IMR-90 (cell line): ENCODE measurements at regions of chr7 and their contacts with region 1.

Region 1: DNA sequence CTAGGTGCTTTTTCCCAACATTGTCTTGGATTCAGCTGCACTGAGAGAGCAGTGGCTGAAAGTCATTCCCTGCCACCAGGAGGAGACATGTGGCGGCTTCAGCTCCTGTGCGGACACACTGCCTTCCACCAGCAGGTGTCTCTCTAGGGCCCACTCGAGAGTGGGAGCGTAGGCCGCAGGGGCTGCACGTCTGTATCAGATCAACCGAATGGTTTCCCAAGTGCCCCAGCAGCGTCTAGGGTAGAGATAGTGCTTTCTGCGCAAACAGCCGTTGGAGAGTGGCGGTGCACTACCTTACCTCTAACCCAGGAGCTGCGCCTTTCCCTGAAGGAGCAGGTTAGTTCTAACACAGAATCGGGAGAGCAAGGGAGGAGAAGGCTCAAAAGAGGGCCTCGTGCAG is 31.7 kb downstream of the PAPOLB start:
- DNase-seq: peak; percentile 57
- ATAC-seq: peak; percentile 98
- H3K4me3 ChIP-seq: no peak overlapping the region
- H3K27ac ChIP-seq: no peak overlapping the region
- H3K4me1 ChIP-seq: no peaks in the 10 kb centered on the region
- H3K27me3 ChIP-seq: no peaks in the 10 kb centered on the region
- CTCF ChIP-seq: peak; percentile 81
- POLR2A ChIP-seq: no peak
- RAD21 ChIP-seq: peak; percentile 52

Region 2: GRCh38 chr7:4842319-4843064 is 12.3 kb after region 1 on chr7:
- CTCF ChIA-PET with region 1: no interaction called
- POLR2A ChIA-PET with region 1: no interaction called
- dilution Hi-C with region 1: no loop called
- in situ Hi-C with region 1: no loop called
- intact Hi-C with region 1: no loop called
- DNase-seq: peak; percentile 13
- ATAC-seq: peak; percentile 83
- H3K4me3 ChIP-seq: no peak overlapping the region
- H3K27ac ChIP-seq: peak overlapping the region; percentile 77; the same call in 1 of the 2 replicates
- H3K4me1 ChIP-seq: peaks cover 5% of the 10 kb centered on the region; the same call in 1 of the 2 replicates
- H3K27me3 ChIP-seq: no peaks in the 10 kb centered on the region; the same call in 1 of the 2 replicates
- CTCF ChIP-seq: no peak
- POLR2A ChIP-seq: no peak
- RAD21 ChIP-seq: no peak

Region 3: GRCh38 chr7:4883374-4884144 is 53.4 kb after region 1 on chr7 and contains the start of gene RADIL:
- CTCF ChIA-PET with region 1: no interaction called
- POLR2A ChIA-PET with region 1: no interaction called
- dilution Hi-C with region 1: no loop called
- in situ Hi-C with region 1: no loop called
- intact Hi-C with region 1: loop called (anchors 2 kb)
- DNase-seq: peak; percentile 74
- ATAC-seq: peak; percentile 93
- H3K4me3 ChIP-seq: peak within 1 kb of the TSS; percentile 53
- H3K27ac ChIP-seq: no peak within 1 kb of the TSS
- H3K4me1 ChIP-seq: peaks cover 2% of the 10 kb centered on the region; the same call in 1 of the 2 replicates
- H3K27me3 ChIP-seq: peaks cover 2% of the 10 kb centered on the region
- CTCF ChIP-seq: peak; percentile 63
- POLR2A ChIP-seq: no peak
- RAD21 ChIP-seq: peak; percentile 37
- total RNA-seq, gene RADIL: 0.18 TPM in 1 of 2 replicates, not detected in the other

Region 4: GRCh38 chr7:4895766-4896165 is 65.6 kb after region 1 on chr7:
- CTCF ChIA-PET with region 1: no interaction called
- POLR2A ChIA-PET with region 1: no interaction called
- dilution Hi-C with region 1: no loop called
- in situ Hi-C with region 1: no loop called
- intact Hi-C with region 1: no loop called
- DNase-seq: no peak
- ATAC-seq: no peak
- H3K4me3 ChIP-seq: no peak overlapping the region
- H3K27ac ChIP-seq: no peak overlapping the region
- H3K4me1 ChIP-seq: no peaks in the 10 kb centered on the region
- H3K27me3 ChIP-seq: no peaks in the 10 kb centered on the region
- CTCF ChIP-seq: no peak
- POLR2A ChIP-seq: no peak
- RAD21 ChIP-seq: no peak

Region 5: GRCh38 chr7:5083311-5083711 is 253.1 kb after region 1 on chr7:
- CTCF ChIA-PET with region 1: interaction called, 14 read pairs
- POLR2A ChIA-PET with region 1: no interaction called
- dilution Hi-C with region 1: no loop called
- in situ Hi-C with region 1: no loop called
- intact Hi-C with region 1: loop called (anchors 1 kb)
- DNase-seq: no peak
- ATAC-seq: no peak
- H3K4me3 ChIP-seq: no peak overlapping the region
- H3K27ac ChIP-seq: no peak overlapping the region
- H3K4me1 ChIP-seq: no peaks in the 10 kb centered on the region
- H3K27me3 ChIP-seq: peaks cover 7% of the 10 kb centered on the region; the same call in 1 of the 2 replicates
- CTCF ChIP-seq: no peak
- POLR2A ChIP-seq: no peak
- RAD21 ChIP-seq: no peak

Region 6: GRCh38 chr7:5088906-5089305 is 258.7 kb after region 1 on chr7:
- CTCF ChIA-PET with region 1: interaction called, 14 read pairs
- POLR2A ChIA-PET with region 1: no interaction called
- dilution Hi-C with region 1: no loop called
- in situ Hi-C with region 1: no loop called
- intact Hi-C with region 1: loop called (anchors 1 kb)
- DNase-seq: no peak
- ATAC-seq: no peak
- H3K4me3 ChIP-seq: no peak overlapping the region
- H3K27ac ChIP-seq: no peak overlapping the region
- H3K4me1 ChIP-seq: no peaks in the 10 kb centered on the region
- H3K27me3 ChIP-seq: peaks cover 4% of the 10 kb centered on the region; the same call in 1 of the 2 replicates
- CTCF ChIP-seq: no peak
- POLR2A ChIP-seq: no peak
- RAD21 ChIP-seq: no peak

Region 7: GRCh38 chr7:5248201-5248885 is 418.2 kb after region 1 on chr7:
- CTCF ChIA-PET with region 1: no interaction called
- POLR2A ChIA-PET with region 1: no interaction called
- dilution Hi-C with region 1: no loop called
- in situ Hi-C with region 1: no loop called
- intact Hi-C with region 1: no loop called
- DNase-seq: peak; percentile 21
- ATAC-seq: no peak; the same call in none of the 2 replicates
- H3K4me3 ChIP-seq: no peak overlapping the region
- H3K27ac ChIP-seq: no peak overlapping the region
- H3K4me1 ChIP-seq: no peaks in the 10 kb centered on the region
- H3K27me3 ChIP-seq: peaks cover 9% of the 10 kb centered on the region; the same call in 1 of the 2 replicates
- CTCF ChIP-seq: no peak
- POLR2A ChIP-seq: no peak
- RAD21 ChIP-seq: no peak

Region 8: GRCh38 chr7:5284304-5285281 is 454.4 kb after region 1 on chr7:
- CTCF ChIA-PET with region 1: no interaction called
- POLR2A ChIA-PET with region 1: no interaction called
- dilution Hi-C with region 1: no loop called
- in situ Hi-C with region 1: no loop called
- intact Hi-C with region 1: no loop called
- DNase-seq: no peak
- ATAC-seq: no peak
- H3K4me3 ChIP-seq: no peak overlapping the region
- H3K27ac ChIP-seq: no peak overlapping the region
- H3K4me1 ChIP-seq: no peaks in the 10 kb centered on the region
- H3K27me3 ChIP-seq: no peaks in the 10 kb centered on the region; the same call in 1 of the 2 replicates
- CTCF ChIP-seq: peak; percentile 24; the same call in 1 of the 2 replicates
- POLR2A ChIP-seq: no peak
- RAD21 ChIP-seq: peak; percentile 16; the same call in 1 of the 2 replicates